ENCODE measurements at regions of chr12 and their contacts with region 1.

Region 1: DNA sequence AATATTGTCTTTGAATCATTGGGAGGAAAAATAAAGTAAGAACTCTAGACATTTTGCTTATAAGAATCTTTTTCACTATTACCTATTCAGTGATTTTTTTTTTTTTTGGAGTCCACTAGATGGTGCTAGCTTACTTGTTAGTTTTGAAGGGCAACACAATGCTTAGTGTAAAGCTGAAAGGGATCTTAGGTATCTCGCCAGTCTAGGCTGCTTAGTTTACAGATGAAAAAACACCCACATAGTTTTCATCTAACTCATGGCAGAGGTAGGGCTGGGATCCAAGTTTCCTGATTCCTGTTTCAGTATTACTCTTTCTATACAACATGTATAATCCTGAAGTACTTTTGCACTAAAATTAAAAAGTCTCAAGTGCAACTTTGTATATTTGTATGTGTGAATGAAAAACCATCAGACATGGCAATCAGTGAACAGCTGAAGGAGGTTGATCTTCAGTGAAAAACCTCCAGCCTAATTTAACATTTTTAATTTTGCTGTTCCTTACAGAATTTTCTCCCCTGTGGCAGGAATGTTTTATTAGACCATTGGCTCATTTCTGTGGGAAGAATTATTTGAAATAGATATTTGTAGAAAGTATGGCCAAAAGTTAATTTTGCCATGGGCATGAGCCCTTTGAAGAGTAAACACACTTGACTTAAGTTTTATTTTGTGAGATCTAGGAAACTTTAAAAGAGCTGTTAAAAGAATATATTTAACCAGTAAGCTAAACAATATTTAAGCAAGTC is 40.7 kb downstream of the LRRIQ1 start:
- DNase-seq: peak; percentile 81
- H3K4me3 ChIP-seq: no peak overlapping the region
- H3K27ac ChIP-seq: no peak overlapping the region
- H3K27me3 ChIP-seq: no peaks in the 10 kb centered on the region
- CTCF ChIP-seq: peak; percentile 61

Region 2: GRCh38 chr12:85448548-85449139 is 371.8 kb after region 1 on chr12:
- CTCF ChIA-PET with region 1: interaction called, 30 read pairs
- POLR2A ChIA-PET with region 1: no interaction called
- DNase-seq: no peak
- H3K4me3 ChIP-seq: no peak overlapping the region
- H3K27ac ChIP-seq: no peak overlapping the region
- H3K27me3 ChIP-seq: no peaks in the 10 kb centered on the region
- CTCF ChIP-seq: peak; percentile 48

Measured in AG04450 (cell line).